Activated CD4-positive, alpha-beta memory T cell treated with anti-CD3 and anti-CD28 coated beads for 36 hours (primary cell): ENCODE measurements at regions of chr12 and their contacts with region 1.

Region 1: GRCh38 chr12:66345212-66345611 is 42.9 kb downstream of the HELB start:
- DNase-seq: no peak
- H3K4me3 Mint-ChIP-seq: no peak overlapping the region
- H3K27ac Mint-ChIP-seq: peak overlapping the region; percentile 36
- H3K4me1 Mint-ChIP-seq: peaks cover 32% of the 10 kb centered on the region
- H3K27me3 Mint-ChIP-seq: no peaks in the 10 kb centered on the region

Region 2: GRCh38 chr12:66288121-66288520 is 57.1 kb before region 1 on chr12:
- CTCF ChIA-PET with region 1: no interaction called
- POLR2A ChIA-PET with region 1: no interaction called
- intact Hi-C with region 1: loop called (anchors 10 kb)
- DNase-seq: peak; percentile 67
- H3K4me3 Mint-ChIP-seq: peak overlapping the region; percentile 49
- H3K27ac Mint-ChIP-seq: peak overlapping the region; percentile 44
- H3K4me1 Mint-ChIP-seq: peaks cover 62% of the 10 kb centered on the region
- H3K27me3 Mint-ChIP-seq: no peaks in the 10 kb centered on the region

Region 3: DNA sequence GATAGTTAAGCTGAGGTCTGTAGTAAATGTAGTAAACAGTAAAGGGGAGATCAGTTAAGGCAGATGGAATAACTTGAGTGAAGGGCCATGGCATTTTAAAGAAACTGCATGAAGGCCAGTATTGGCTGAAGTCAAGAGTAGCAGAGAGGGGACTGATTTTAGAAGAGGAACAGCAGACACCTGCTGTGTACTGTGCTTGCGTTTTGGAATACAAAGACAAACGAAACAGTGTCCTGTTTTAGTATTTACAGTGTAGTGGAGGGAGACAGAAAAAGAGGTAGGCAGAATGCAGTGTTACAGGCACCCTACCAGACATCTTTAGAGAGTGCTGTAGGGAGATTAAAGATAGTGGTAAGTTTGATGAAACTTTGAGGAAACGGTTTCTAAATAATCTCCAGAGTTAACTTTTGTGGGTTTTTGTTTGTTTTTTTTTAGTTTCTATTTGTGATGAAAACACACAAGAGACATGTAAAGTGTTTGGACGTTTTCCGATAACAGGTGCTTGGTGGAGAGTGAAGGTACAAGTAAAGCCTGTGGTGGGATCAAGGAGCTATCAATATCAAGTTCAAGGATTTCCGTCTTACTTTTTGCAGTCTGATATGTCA is 40.8 kb before region 1 on chr12:
- CTCF ChIA-PET with region 1: no interaction called
- POLR2A ChIA-PET with region 1: no interaction called
- intact Hi-C with region 1: no loop called
- DNase-seq: no peak
- H3K4me3 Mint-ChIP-seq: peak overlapping the region; percentile 99
- H3K27ac Mint-ChIP-seq: peak overlapping the region; percentile 99
- H3K4me1 Mint-ChIP-seq: peaks cover 42% of the 10 kb centered on the region
- H3K27me3 Mint-ChIP-seq: no peaks in the 10 kb centered on the region